GM10248 (cell line): ENCODE measurements at regions of chr7 and their contacts with region 1.

Region 1: DNA sequence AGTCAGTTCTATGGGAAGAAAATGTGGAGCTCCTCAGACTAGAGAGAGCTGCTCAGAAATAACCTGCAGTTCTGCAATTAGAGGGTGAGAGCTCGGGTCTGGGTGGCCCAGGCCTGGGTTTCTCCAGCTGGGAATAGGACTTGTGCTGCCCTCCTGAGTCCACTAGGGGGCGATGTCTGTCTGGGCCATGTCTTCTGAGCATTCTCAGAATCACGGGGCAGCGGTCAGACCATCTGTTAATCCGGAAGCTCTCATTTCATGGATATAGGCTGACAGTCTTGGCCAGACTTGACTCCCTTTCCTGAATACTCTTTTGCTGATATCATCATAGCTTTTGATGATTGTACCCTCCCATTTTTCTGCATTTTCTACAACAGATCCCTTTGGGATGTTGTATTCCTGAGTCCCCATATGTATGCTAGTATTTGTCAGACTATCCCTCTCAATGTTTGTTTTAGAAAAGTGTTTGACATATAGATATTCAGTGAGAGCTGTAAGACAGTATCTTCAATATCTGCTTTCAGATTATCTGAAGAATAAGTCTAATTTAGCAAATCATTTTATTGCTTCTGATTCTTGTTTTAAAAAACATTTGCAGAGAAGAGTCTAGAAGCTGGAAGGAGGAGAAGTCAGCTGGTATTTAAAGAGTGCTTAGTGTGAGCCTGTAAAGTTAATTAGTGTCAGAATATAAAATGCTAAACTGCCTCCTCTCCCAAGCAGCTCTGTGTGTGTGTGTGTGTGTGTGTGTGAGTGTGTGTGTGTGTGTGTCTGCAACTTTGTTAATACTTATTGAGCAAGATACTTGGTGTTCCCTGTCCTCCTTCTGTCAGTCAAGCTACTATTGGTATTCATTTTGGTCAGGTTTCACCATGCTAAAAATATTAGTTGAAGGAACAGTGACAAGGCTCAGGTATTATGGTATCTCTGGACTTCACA is 38.0 kb downstream of the STARD3NL start:
- DNase-seq: peak; percentile 79
- CTCF ChIP-seq: peak; percentile 86

Region 2: DNA sequence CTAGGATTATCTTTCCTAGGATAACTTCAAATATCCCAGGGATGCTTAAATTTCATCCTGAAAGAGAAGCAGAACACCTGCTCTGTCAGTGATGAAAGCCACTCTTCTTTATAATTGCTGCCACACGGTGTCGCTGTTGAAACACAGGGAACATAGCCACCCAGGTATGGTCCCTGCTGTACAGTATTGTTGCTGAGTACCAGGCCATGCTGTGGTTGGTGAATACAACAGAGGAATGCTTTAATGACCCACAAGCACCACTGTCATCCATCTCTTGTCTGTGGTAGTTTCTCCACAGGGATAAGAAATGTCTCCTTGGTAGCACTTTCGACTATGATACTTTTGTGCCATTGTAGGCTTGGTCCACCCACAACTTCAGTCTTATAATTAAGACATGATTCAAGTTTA is 108.5 kb before region 1 on chr7:
- CTCF ChIA-PET with region 1: interaction called, 102 read pairs
- POLR2A ChIA-PET with region 1: no interaction called
- DNase-seq: peak; percentile 55
- CTCF ChIP-seq: peak; percentile 73

Region 3: GRCh38 chr7:38169847-38170246 is 46.2 kb before region 1 on chr7:
- CTCF ChIA-PET with region 1: interaction called, 15 read pairs
- POLR2A ChIA-PET with region 1: no interaction called
- DNase-seq: no peak
- CTCF ChIP-seq: no peak

Region 4: GRCh38 chr7:38195804-38196595 is 20.0 kb before region 1 on chr7:
- CTCF ChIA-PET with region 1: interaction called, 99 read pairs
- POLR2A ChIA-PET with region 1: interaction called, 6 read pairs
- DNase-seq: no peak
- CTCF ChIP-seq: no peak

Region 5: GRCh38 chr7:38318803-38319416 is 102.9 kb after region 1 on chr7:
- CTCF ChIA-PET with region 1: interaction called, 31 read pairs
- POLR2A ChIA-PET with region 1: no interaction called
- DNase-seq: peak; percentile 68
- CTCF ChIP-seq: peak; percentile 61

Region 6: GRCh38 chr7:38369816-38370493 is 154.0 kb after region 1 on chr7:
- CTCF ChIA-PET with region 1: interaction called, 103 read pairs
- POLR2A ChIA-PET with region 1: no interaction called
- DNase-seq: peak; percentile 63
- CTCF ChIP-seq: peak; percentile 95

Region 7: GRCh38 chr7:38524786-38525185 is 308.8 kb after region 1 on chr7:
- CTCF ChIA-PET with region 1: no interaction called
- POLR2A ChIA-PET with region 1: no interaction called
- DNase-seq: no peak
- CTCF ChIP-seq: no peak